Caco-2 (cell line): ENCODE measurements at regions of chr7 and their contacts with region 1.

Region 1: DNA sequence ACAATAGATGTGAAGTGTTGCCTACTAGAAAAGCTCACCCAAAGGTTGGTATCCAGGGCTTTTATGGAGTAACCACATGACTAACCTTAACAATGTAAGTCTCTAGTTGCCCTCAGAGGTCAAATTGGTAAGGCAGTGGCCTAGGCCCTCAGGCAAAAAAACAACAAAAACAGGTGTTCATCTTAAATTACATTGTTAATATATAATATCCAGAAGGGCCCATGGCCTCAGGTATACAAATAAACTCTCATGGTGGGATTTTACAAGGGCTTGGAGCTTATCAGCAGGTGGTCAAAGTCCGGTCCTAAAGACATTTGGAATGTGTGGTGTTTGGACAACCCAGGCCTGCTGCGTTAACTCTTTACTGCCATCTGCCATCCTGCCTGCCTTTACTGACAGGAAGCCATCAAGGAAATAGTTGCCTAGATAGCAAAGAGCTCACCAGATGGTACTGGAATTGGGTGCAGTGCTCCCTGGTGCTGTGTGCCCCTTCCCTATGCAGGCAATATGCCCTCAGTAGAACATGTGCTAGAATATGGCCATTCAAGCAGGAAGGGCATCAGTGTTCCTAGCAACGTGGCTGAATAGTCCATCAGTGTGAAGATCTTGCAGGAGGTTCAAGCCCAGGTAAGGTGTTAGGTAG is 36.2 kb downstream of the TOMM7 start:
- DNase-seq: peak; percentile 92 to 94
- H3K4me3 ChIP-seq: no peak overlapping the region
- H3K4me3 Mint-ChIP-seq: no peak overlapping the region
- H3K27ac Mint-ChIP-seq: peak overlapping the region; percentile 82
- H3K4me1 ChIP-seq: peaks cover 64% of the 10 kb centered on the region
- H3K4me1 Mint-ChIP-seq: peaks cover 41% of the 10 kb centered on the region
- H3K27me3 ChIP-seq: no peaks in the 10 kb centered on the region
- H3K27me3 Mint-ChIP-seq: no peaks in the 10 kb centered on the region
- CTCF ChIP-seq: no peak

Region 2: GRCh38 chr7:22667562-22668239 is 118.7 kb before region 1 on chr7:
- CTCF ChIA-PET with region 1: interaction called, 3 read pairs
- POLR2A ChIA-PET with region 1: no interaction called
- intact Hi-C with region 1: loop called (anchors 1 kb)
- DNase-seq: peak; percentile 62 to 72
- H3K4me3 ChIP-seq: no peak overlapping the region
- H3K4me3 Mint-ChIP-seq: no peak overlapping the region
- H3K27ac Mint-ChIP-seq: peak overlapping the region; percentile 69
- H3K4me1 ChIP-seq: peaks cover 40% of the 10 kb centered on the region
- H3K4me1 Mint-ChIP-seq: peaks cover 21% of the 10 kb centered on the region
- H3K27me3 ChIP-seq: no peaks in the 10 kb centered on the region
- H3K27me3 Mint-ChIP-seq: no peaks in the 10 kb centered on the region
- CTCF ChIP-seq: no peak

Region 3: DNA sequence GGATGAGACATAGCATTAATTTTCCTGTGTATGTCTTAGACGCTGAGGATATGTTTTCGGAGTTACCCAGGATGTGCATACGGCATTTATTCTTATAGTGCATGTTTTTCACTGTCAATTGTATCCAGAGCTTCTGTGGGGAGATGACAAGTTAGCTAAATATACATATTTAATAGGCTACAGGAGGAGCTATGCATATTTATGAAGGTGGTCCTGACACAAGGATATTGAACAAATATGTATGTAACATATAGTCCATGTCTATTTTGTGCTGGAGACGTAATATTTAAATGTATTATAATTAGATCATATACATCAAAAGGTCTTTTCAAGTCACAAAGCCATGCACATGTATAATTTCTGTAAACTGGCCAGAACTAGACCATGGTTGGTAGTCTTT is 43.4 kb before region 1 on chr7:
- CTCF ChIA-PET with region 1: no interaction called
- POLR2A ChIA-PET with region 1: no interaction called
- intact Hi-C with region 1: loop called (anchors 2 kb)
- DNase-seq: no peak
- H3K4me3 ChIP-seq: no peak overlapping the region
- H3K4me3 Mint-ChIP-seq: no peak overlapping the region
- H3K27ac Mint-ChIP-seq: no peak overlapping the region
- H3K4me1 ChIP-seq: peaks cover 17% of the 10 kb centered on the region
- H3K4me1 Mint-ChIP-seq: peaks cover 10% of the 10 kb centered on the region
- H3K27me3 ChIP-seq: no peaks in the 10 kb centered on the region
- H3K27me3 Mint-ChIP-seq: no peaks in the 10 kb centered on the region
- CTCF ChIP-seq: no peak

Region 4: DNA sequence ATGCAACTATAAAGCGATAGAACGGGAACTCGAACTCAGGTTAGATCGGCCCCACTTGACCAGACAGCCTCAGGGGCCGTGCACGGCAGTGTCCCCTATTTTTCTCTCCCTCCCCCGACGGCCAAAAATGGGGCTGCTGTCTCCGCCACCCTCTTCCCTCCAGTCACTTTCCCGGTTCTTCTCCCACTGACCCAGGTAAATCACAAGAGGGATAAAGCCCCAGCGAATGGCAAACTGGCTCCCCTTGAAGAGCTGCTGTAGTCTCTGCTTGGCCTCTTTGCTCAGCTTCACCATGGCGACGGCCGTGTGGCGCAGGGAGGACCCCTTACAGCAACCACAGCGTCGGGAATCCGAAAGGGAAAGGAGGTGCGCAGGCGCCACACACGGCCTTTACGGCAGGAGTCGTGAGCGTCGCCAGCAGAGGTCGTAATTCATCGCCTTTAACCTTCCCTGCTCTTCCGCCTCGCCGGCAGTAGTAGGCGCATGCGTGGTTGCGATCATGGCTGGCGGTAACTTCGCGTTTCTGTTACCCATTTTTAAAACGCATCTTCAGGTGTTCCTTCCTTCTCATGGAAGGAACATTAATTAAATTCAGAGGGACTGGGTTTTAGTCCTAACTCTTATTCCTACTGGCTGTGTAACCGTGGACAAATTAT is 36.2 kb after region 1 on chr7 and contains the start of gene TOMM7:
- CTCF ChIA-PET with region 1: interaction called, 5 read pairs
- POLR2A ChIA-PET with region 1: interaction called, 5 read pairs
- intact Hi-C with region 1: loop called (anchors 1 kb)
- DNase-seq: peak; percentile 92 to 95
- H3K4me3 ChIP-seq: peak within 1 kb of the TSS; percentile 89
- H3K4me3 Mint-ChIP-seq: peak within 1 kb of the TSS; percentile 95
- H3K27ac Mint-ChIP-seq: peak within 1 kb of the TSS; percentile 98
- H3K4me1 ChIP-seq: peaks cover 8% of the 10 kb centered on the region; the same call in 1 of the 2 replicates
- H3K4me1 Mint-ChIP-seq: peaks cover 23% of the 10 kb centered on the region
- H3K27me3 ChIP-seq: no peaks in the 10 kb centered on the region
- H3K27me3 Mint-ChIP-seq: no peaks in the 10 kb centered on the region
- CTCF ChIP-seq: peak in 1 of 2 experiments; percentile 28
- total RNA-seq, gene TOMM7: 192 and 220 TPM in 2 replicates

Region 5: GRCh38 chr7:22841954-22842353 is 55.5 kb after region 1 on chr7:
- CTCF ChIA-PET with region 1: no interaction called
- POLR2A ChIA-PET with region 1: no interaction called
- intact Hi-C with region 1: no loop called
- DNase-seq: no peak
- H3K4me3 ChIP-seq: no peak overlapping the region
- H3K4me3 Mint-ChIP-seq: no peak overlapping the region
- H3K27ac Mint-ChIP-seq: no peak overlapping the region
- H3K4me1 ChIP-seq: 0 out of 2 replicates have a peak, but pooled peaks cover 5% of the 10 kb centered on the region
- H3K4me1 Mint-ChIP-seq: peaks cover 7% of the 10 kb centered on the region
- H3K27me3 ChIP-seq: no peaks in the 10 kb centered on the region
- H3K27me3 Mint-ChIP-seq: no peaks in the 10 kb centered on the region
- CTCF ChIP-seq: no peak

Region 6: DNA sequence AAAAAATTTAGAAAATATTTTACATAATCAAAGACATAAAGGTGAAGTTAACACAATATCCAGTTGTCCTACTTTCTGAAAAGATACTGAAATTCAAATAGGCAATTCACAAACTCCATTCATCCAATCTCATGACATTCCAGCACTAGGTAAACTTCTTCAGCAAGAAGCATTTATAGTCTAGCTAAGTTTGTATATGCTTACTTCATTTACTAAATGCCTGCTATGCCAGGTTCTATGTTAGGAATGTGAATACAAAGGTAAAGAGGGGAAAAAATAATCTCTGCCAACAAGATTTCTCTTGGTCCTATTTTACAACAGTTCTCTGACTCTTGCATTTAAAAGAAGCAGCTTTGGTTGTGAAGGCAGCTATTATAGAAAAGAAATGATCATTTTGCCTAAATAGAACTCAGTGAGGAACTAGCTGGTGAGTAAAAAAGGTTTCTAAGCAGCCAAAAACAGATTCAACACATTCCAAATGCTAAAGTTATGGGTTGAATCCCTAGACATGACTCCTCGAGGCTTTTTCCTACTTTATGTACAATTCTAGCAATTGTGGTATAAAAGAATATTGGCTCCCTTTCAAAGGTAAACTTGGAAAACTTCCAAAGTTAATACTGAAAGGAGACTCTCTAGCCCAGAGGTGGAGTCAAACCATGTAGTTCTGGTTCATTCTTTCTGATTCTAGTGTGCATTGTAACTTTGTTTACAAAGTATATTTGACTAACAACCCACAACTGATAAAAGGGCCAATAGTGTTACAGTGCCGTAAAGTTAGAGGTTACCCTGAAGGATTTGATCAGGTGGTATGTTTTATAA is 288.2 kb after region 1 on chr7:
- CTCF ChIA-PET with region 1: no interaction called
- POLR2A ChIA-PET with region 1: no interaction called
- intact Hi-C with region 1: loop called (anchors 1 kb)
- DNase-seq: no peak
- H3K4me3 ChIP-seq: no peak overlapping the region
- H3K4me3 Mint-ChIP-seq: peak overlapping the region; percentile 31
- H3K27ac Mint-ChIP-seq: no peak overlapping the region
- H3K4me1 ChIP-seq: peaks cover 33% of the 10 kb centered on the region
- H3K4me1 Mint-ChIP-seq: peaks cover 41% of the 10 kb centered on the region
- H3K27me3 ChIP-seq: no peaks in the 10 kb centered on the region
- H3K27me3 Mint-ChIP-seq: no peaks in the 10 kb centered on the region
- CTCF ChIP-seq: no peak